ENCODE measurements at regions of chrX and their contacts with region 1.

Region 1: GRCh38 chrX:119606280-119607015 is at the start of gene NKRF:
- DNase-seq: peak; percentile 78
- ATAC-seq: peak; percentile 78
- H3K4me3 ChIP-seq: peak within 1 kb of the TSS; percentile 57
- H3K27ac ChIP-seq: peak within 1 kb of the TSS; percentile 85
- H3K4me1 ChIP-seq: no peaks in the 10 kb centered on the region; the same call in 1 of the 2 replicates
- H3K27me3 ChIP-seq: no peaks in the 10 kb centered on the region
- CTCF ChIP-seq: no peak
- EP300 ChIP-seq: no peak
- POLR2A ChIP-seq: peak; percentile 93
- RAD21 ChIP-seq: no peak
- polyA plus RNA-seq, gene NKRF: 6.2 to 9.5 TPM

Region 2: GRCh38 chrX:119583431-119584059 is 22.9 kb before region 1 on chrX:
- CTCF ChIA-PET with region 1: interaction called, 15 read pairs
- POLR2A ChIA-PET with region 1: interaction called, 8 read pairs
- RAD21 ChIA-PET with region 1: interaction called, 8 read pairs
- SMC1A ChIA-PET with region 1: interaction called, 8 read pairs
- in situ Hi-C with region 1: no loop called
- intact Hi-C with region 1: no loop called
- DNase-seq: no peak
- ATAC-seq: 0 out of 3 replicates have a peak, but pooled peaks have one; percentile 16
- H3K4me3 ChIP-seq: no peak overlapping the region
- H3K27ac ChIP-seq: no peak overlapping the region
- H3K4me1 ChIP-seq: no peaks in the 10 kb centered on the region
- H3K27me3 ChIP-seq: no peaks in the 10 kb centered on the region
- CTCF ChIP-seq: no peak
- EP300 ChIP-seq: no peak
- POLR2A ChIP-seq: no peak
- RAD21 ChIP-seq: no peak

Measured in GM12878 (cell line).